MCF 10A (cell line): ENCODE measurements at regions of chr17 and their contacts with region 1.

Region 1: GRCh38 chr17:66673668-66674315 is 161.1 kb upstream of the CACNG5 start:
- DNase-seq: peak; percentile 83
- H3K4me3 Mint-ChIP-seq: peak overlapping the region; percentile 56
- H3K27ac Mint-ChIP-seq: peak overlapping the region; percentile 92
- H3K4me1 Mint-ChIP-seq: peaks cover 46% of the 10 kb centered on the region
- H3K27me3 Mint-ChIP-seq: no peaks in the 10 kb centered on the region
- CTCF ChIP-seq: peak; percentile 85

Region 2: GRCh38 chr17:66200685-66201092 is 473.1 kb before region 1 on chr17:
- CTCF ChIA-PET with region 1: interaction called, 13 read pairs
- POLR2A ChIA-PET with region 1: interaction called, 7 read pairs
- intact Hi-C with region 1: loop called (anchors 1 kb)
- DNase-seq: peak; percentile 79
- H3K4me3 Mint-ChIP-seq: no peak overlapping the region
- H3K27ac Mint-ChIP-seq: no peak overlapping the region
- H3K4me1 Mint-ChIP-seq: peaks cover 6% of the 10 kb centered on the region
- H3K27me3 Mint-ChIP-seq: no peaks in the 10 kb centered on the region
- CTCF ChIP-seq: peak; percentile 64

Region 3: DNA sequence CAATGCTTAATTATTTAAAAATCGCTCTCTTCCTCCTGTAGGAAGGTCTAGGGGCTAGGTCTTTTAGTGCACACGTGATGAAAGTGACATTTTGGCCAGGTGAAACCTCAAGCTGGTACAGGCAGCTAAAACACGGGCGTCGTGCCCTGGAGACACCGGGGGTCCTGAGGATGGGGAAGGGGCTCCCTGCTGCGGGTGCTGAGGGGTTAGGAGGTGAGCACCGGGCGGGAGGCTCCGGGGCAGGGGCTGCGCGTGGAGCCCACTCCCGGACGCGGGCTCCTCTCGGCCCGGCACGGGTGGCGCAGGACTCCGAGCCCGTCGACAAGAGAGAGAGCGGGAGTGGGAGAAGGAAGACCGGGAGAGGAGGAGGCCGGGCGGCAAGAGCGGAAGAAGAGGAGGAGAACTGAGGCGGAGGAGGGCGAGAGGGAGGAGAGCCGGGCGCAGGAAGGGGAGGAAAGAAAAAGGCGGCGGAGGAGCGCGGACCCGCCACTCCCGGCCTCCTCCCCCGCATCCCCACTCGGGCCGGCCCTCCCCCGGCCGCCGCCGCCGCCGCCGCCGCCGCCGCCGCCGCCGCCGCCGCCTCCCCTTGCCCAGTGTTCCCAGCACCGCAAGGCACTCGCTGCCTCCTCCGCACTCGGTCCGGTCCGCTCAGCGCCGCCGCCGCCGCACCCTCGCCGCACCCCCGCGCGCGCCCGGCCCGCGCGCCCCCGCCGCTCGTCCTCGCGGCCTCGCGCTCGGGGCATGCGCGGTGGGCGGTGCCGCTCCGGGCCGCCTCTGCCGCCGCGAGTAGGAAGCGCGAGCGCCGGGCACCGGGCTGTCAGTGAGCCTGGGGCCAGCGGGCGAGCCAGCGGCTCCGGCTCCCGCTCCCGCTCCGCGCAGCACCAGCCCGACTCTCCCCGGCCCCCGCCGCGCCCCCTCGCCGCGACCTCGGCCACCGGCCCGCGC is 371.7 kb before region 1 on chr17 and contains the start of gene PRKCA:
- CTCF ChIA-PET with region 1: no interaction called
- POLR2A ChIA-PET with region 1: interaction called, 8 read pairs
- intact Hi-C with region 1: loop called (anchors 2 kb)
- DNase-seq: peak; percentile 63
- H3K4me3 Mint-ChIP-seq: peak within 1 kb of the TSS; percentile 96
- H3K27ac Mint-ChIP-seq: peak within 1 kb of the TSS; percentile 97
- H3K4me1 Mint-ChIP-seq: peaks cover 35% of the 10 kb centered on the region
- H3K27me3 Mint-ChIP-seq: no peaks in the 10 kb centered on the region
- CTCF ChIP-seq: no peak
- total RNA-seq, gene PRKCA: 20.7 and 22.8 TPM in 2 replicates

Region 4: GRCh38 chr17:66567234-66568170 is 106.3 kb before region 1 on chr17:
- CTCF ChIA-PET with region 1: interaction called, 3 read pairs
- POLR2A ChIA-PET with region 1: no interaction called
- intact Hi-C with region 1: loop called (anchors 1 kb)
- DNase-seq: peak; percentile 83
- H3K4me3 Mint-ChIP-seq: no peak overlapping the region
- H3K27ac Mint-ChIP-seq: peak overlapping the region; percentile 66
- H3K4me1 Mint-ChIP-seq: peaks cover 11% of the 10 kb centered on the region
- H3K27me3 Mint-ChIP-seq: no peaks in the 10 kb centered on the region
- CTCF ChIP-seq: peak; percentile 90

Region 5: GRCh38 chr17:66655861-66656260 is 17.9 kb before region 1 on chr17:
- CTCF ChIA-PET with region 1: interaction called, 4 read pairs
- POLR2A ChIA-PET with region 1: interaction called, 39 read pairs
- intact Hi-C with region 1: no loop called
- DNase-seq: peak; percentile 79
- H3K4me3 Mint-ChIP-seq: no peak overlapping the region
- H3K27ac Mint-ChIP-seq: peak overlapping the region; percentile 28
- H3K4me1 Mint-ChIP-seq: peaks cover 33% of the 10 kb centered on the region
- H3K27me3 Mint-ChIP-seq: no peaks in the 10 kb centered on the region
- CTCF ChIP-seq: no peak